ENCODE measurements at regions of chr21 and their contacts with region 1.

Region 1: DNA sequence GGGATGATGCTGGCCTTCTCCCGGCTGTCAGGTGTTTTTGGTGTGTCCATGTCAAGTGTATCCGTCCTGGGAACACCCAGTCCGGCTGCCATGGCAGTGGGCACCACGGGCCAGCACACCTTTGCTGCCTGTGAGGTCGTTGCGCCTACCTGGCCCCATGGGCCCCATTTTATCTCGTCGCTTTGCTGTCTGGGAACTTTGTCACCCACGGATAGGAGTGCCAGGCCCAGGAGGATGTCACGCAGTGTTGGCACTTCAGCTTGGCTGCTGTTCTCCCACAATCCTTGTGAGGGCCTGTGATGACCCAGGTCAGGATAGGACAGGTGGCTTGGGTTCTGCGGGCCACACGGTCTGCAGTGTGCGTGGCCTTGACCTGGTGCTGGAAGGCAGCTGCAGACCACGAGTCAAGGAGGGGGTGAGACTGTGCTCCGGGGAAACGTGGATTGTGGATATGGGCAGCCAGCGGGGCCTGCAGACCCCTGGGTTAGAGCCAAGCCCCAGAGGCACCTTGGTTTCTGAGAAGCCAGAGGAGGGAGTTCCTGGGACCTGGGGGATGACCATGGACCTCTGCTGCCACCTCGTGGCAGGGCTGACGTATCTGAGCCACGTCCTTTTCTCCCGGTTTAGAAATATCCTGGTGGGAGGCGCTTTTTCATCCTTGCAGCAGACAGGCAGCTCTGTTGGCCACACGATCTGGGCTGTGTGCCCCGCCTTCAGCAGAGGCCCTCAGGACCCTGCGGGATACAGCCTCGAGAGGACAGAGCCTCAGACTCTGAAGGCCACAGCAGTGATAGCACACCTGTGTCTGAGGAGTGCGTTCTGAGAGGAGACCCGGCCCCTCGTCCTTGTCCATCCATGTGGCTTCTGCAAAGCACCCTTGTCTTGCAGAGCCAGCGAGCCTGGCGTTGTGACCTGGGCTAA is 161.1 kb upstream of the COL6A1 start:
- DNase-seq: peak; percentile 50
- H3K4me3 ChIP-seq: no peak overlapping the region
- CTCF ChIP-seq: peak; percentile 87

Region 2: GRCh38 chr21:45287438-45288391 is 532.7 kb before region 1 on chr21 and contains the start of gene POFUT2:
- CTCF ChIA-PET with region 1: interaction called, 17 read pairs
- POLR2A ChIA-PET with region 1: interaction called, 3 read pairs
- DNase-seq: no peak
- H3K4me3 ChIP-seq: peak within 1 kb of the TSS; percentile 80
- CTCF ChIP-seq: no peak

Region 3: GRCh38 chr21:45439161-45439872 is 381.1 kb before region 1 on chr21:
- CTCF ChIA-PET with region 1: interaction called, 20 read pairs
- POLR2A ChIA-PET with region 1: no interaction called
- DNase-seq: peak; percentile 31
- H3K4me3 ChIP-seq: peak overlapping the region; percentile 21; the same call in 1 of the 2 replicates
- CTCF ChIP-seq: peak; percentile 94

Region 4: GRCh38 chr21:45478115-45478801 is 342.2 kb before region 1 on chr21:
- CTCF ChIA-PET with region 1: interaction called, 10 read pairs
- POLR2A ChIA-PET with region 1: no interaction called
- DNase-seq: no peak
- H3K4me3 ChIP-seq: no peak overlapping the region; the same call in 1 of the 2 replicates
- CTCF ChIP-seq: peak; percentile 91

Region 5: GRCh38 chr21:45721671-45722070 is 98.8 kb before region 1 on chr21:
- CTCF ChIA-PET with region 1: no interaction called
- POLR2A ChIA-PET with region 1: no interaction called
- DNase-seq: no peak
- H3K4me3 ChIP-seq: no peak overlapping the region
- CTCF ChIP-seq: no peak

Region 6: GRCh38 chr21:45836268-45836655 is 15.8 kb after region 1 on chr21:
- CTCF ChIA-PET with region 1: interaction called, 79 read pairs
- POLR2A ChIA-PET with region 1: no interaction called
- DNase-seq: no peak
- H3K4me3 ChIP-seq: no peak overlapping the region
- CTCF ChIP-seq: no peak

Region 7: DNA sequence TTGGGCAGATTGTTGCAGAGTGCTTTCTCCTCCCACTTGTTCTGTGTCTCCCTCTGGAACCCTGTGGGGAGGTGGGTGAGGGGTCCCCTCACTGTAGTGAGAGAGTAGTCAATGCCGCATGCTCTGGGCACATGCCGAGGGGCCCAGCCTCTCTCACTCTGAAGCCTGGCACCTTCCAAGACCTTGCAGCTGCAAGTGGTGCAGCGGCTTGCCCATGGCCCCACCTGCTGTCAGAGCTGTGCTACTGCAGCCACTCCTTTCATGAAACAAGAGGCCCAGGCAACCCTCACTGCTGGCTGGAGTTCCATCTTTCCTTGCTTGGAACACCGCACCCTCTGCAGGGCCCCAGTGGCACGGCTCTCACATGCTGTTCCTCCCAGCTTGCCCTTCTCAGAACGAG is 102.7 kb after region 1 on chr21:
- CTCF ChIA-PET with region 1: interaction called, 17 read pairs
- POLR2A ChIA-PET with region 1: no interaction called
- DNase-seq: peak; percentile 1
- H3K4me3 ChIP-seq: no peak overlapping the region
- CTCF ChIP-seq: peak; percentile 95